Heart left ventricle (tissue), 16 donors: ENCODE measurements at regions of chr3 and their contacts with region 1.

Region 1: DNA sequence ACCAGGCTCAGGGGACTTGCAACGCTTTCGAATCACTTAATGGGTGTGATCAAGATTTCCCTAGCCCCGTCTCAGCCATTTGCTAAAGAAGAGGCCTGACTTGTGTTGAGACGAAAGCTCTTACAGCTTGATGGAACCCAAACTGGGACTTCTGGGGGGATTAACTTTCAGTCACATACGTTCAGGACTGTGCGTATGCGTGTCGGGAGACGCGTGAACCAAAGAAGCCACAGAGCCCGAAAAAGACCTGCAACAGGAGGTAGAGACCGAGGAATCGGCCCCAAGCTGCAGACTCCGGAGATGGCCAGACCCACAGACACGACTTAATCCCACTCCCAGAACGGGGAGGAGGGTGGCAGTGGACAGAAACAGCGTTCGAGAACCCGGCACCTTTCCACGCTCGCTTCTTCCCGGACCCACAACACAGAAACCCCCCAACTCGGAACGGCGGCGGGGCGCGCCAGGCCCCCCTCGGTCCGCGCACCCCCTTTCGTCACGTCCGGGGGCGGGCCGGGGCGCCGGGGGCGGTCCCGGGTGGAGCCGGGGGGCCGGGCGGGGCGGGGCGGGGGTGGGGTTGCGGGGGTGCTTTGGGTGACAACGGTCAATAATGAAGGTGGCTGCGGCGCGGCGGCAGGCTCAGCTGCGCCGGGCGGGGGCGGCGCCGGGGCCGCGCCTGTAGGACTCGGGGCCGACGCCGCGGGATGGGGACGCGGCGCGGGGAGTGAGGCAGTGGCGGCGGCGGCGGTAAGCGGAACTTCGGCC is at the start of gene ATP11B:
- DNase-seq: peak; percentile 78 to 90 (median 79)
- ATAC-seq: peak; percentile 85 to 95 (median 93)
- H3K4me3 ChIP-seq: peak within 1 kb of the TSS; percentile 66 to 100 (median 89)
- H3K27ac ChIP-seq: peak within 1 kb of the TSS; percentile 87 to 97 (median 92)
- H3K4me1 ChIP-seq: peaks cover 0 to 54% (median 15%) of the 10 kb centered on the region in 12 donors
- H3K27me3 ChIP-seq: no peaks in the 10 kb centered on the region
- CTCF ChIP-seq: peak in 2 of 12 donors; percentile 1 to 10
- POLR2A ChIP-seq: peak; percentile 38 to 77
- total RNA-seq, gene ATP11B: 24.7 to 45.6 (median 36.2) TPM

Region 2: DNA sequence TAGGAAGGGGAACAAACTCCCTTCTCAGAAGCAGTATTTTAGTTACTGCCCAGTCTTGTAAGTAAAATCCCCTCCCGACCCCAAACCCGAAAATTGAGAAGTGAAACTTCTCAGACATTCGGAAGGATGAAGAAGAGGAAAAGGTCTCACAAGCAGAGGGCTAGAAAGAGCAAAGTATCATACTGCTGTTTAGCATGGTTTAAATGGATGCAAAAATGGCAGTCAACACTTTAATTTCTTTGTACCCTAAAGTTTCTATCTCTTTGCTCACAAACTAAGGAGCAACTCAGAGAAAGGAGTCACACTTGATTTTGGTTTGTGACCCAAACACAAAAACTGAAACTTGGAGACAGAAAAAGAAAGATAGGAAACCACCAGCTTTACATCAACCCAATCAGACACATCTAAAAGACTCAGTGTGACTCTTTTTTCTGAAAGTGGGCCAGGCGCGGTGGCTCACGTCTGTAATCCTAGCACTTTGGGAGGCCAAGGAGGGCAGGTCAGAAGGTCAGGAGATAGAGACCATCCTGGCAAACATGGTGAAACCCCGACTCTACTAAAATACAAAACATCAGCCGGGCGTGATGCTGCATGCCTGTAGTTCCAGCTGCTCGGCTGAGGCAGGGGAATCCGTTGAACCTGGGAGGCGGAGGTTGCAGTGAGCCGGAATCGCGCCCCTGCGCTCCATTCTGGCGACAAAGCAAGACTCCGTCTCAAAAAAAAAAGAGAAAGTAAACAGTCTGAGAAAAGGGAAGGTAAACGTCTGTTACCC is 63.0 kb before region 1 on chr3:
- intact Hi-C with region 1: loop called in 1 of 10 experiments (anchors 5 kb)
- DNase-seq: no peak
- ATAC-seq: no peak
- H3K4me3 ChIP-seq: no peak overlapping the region
- H3K27ac ChIP-seq: no peak overlapping the region
- H3K4me1 ChIP-seq: no peaks in the 10 kb centered on the region
- H3K27me3 ChIP-seq: peaks cover 0 to 11% (median 0%) of the 10 kb centered on the region in 9 donors
- CTCF ChIP-seq: no peak
- POLR2A ChIP-seq: no peak

Region 3: GRCh38 chr3:182837855-182838454 is 44.9 kb after region 1 on chr3:
- intact Hi-C with region 1: loop called in 1 of 10 experiments (anchors 5 kb)
- DNase-seq: no peak
- ATAC-seq: no peak
- H3K4me3 ChIP-seq: no peak overlapping the region
- H3K27ac ChIP-seq: no peak overlapping the region
- H3K4me1 ChIP-seq: no peaks in the 10 kb centered on the region
- H3K27me3 ChIP-seq: no peaks in the 10 kb centered on the region
- CTCF ChIP-seq: peak in 10 of 12 donors; percentile 29 to 61 (median 50)
- POLR2A ChIP-seq: no peak